ENCODE measurements at regions of chr4 and their contacts with region 1.

Region 1: GRCh38 chr4:26459054-26459755 is 31.1 kb downstream of the CCKAR start:
- DNase-seq: no peak
- H3K4me3 ChIP-seq: no peak overlapping the region
- H3K27ac ChIP-seq: no peak overlapping the region
- H3K27me3 ChIP-seq: no peaks in the 10 kb centered on the region
- CTCF ChIP-seq: peak in 55 of 56 donors; percentile 31 to 71 (median 51)

Region 2: DNA sequence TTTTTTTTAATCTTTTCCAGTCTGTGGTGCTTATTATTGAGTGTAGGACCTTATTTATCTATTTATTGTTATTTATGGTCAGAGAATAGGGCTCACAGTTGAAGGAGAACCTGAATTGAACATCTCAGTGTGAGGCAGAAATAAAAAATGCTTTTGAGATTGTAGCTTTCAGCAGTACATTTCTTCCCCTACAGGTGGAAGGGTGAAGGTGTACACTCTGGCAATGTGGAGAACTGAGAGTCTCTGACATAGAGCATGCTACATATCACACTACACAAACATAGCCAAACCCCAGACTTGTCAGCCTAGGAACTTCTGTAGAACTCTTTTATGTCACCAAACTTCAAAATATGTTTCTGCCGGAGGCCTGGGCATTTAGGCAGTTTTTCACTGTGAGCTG is 541.6 kb after region 1 on chr4:
- intact Hi-C with region 1: loop called in 1 of 2 experiments (anchors 10 kb)
- DNase-seq: no peak
- H3K4me3 ChIP-seq: no peak overlapping the region
- H3K27ac ChIP-seq: no peak overlapping the region
- H3K27me3 ChIP-seq: no peaks in the 10 kb centered on the region
- CTCF ChIP-seq: peak in 1 of 56 donors; percentile 9

Region 3: DNA sequence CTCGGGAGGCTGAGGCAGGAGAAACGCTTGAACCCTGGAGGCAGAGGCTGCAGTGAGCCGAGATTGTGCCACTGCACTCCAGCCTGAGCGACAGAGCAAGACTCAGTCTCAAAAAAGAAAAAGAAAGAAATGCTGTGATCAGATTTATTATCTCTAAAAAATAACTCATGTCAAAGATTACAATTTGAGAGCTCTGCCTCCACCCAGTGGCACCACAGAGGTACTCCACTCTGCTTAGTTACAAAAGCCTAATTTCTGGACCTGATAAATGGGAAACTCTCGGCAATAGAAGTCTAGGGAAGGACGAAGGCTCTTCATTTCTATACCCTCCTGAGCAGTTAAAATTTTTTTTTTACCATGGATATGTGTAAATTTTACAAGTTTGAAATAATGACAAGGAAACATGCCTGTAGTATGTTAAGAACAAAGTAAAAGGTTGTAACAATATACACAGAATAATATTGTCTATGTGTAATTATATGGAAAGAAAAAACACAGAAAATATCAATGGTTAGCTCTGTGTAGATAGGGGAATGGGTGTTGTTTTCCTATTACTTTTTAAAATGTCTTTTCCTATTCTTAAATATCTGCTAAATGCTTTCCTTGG is 551.2 kb after region 1 on chr4:
- intact Hi-C with region 1: loop called (anchors 10 kb)
- DNase-seq: peak; percentile 32 to 73 (median 62)
- H3K4me3 ChIP-seq: peak overlapping the region in 2 of 59 donors; percentile 8 to 15
- H3K27ac ChIP-seq: peak overlapping the region in 5 of 59 donors; percentile 5 to 40 (median 9)
- H3K27me3 ChIP-seq: no peaks in the 10 kb centered on the region
- CTCF ChIP-seq: peak; percentile 65 to 97 (median 91)